Activated CD4-positive, alpha-beta T cell treated with anti-CD3 and anti-CD28 coated beads, Interleukin-2, amount 10 ng/mL, durations not matched to agents 24 days and 14 days (primary cell): ENCODE measurements at regions of chr3 and their contacts with region 1.

Region 1: GRCh38 chr3:125141596-125142419 is 70.7 kb downstream of the SLC12A8 start:
- DNase-seq: peak; percentile 92
- H3K4me3 Mint-ChIP-seq: peak overlapping the region; percentile 82
- H3K27ac Mint-ChIP-seq: peak overlapping the region; percentile 90
- H3K4me1 Mint-ChIP-seq: peaks cover 58% of the 10 kb centered on the region
- H3K27me3 Mint-ChIP-seq: peaks cover 40% of the 10 kb centered on the region

Region 2: DNA sequence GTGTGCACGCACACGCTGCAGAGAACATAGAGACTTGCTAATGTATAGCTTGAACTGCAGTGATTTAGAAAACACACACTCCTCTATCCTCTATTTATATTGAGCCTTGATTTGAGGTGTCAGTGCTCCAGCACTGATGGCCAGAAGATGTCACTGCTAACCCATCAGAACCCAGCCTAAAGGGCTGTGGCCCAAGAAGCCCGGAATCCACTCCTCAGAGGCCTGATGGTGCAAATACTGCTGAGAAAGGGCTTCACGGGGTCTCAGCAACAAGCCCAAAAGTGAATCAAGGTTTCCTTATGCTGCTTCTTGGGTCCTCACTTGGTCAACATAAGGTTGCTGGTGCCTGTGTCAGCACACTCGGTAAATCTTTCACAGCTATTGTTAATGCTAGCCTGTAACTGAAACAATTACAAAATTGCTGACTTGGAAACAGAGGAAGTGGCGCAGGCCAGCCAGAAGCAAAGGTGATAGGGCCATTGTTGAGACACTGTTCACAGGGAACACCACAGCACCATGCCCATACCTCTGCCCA is 146.3 kb before region 1 on chr3:
- intact Hi-C with region 1: loop called (anchors 5 kb)
- DNase-seq: peak; percentile 87
- H3K4me3 Mint-ChIP-seq: no peak overlapping the region
- H3K27ac Mint-ChIP-seq: no peak overlapping the region
- H3K4me1 Mint-ChIP-seq: peaks cover 13% of the 10 kb centered on the region
- H3K27me3 Mint-ChIP-seq: no peaks in the 10 kb centered on the region

Region 3: GRCh38 chr3:125039131-125040100 is 102.4 kb before region 1 on chr3:
- intact Hi-C with region 1: loop called (anchors 5 kb)
- DNase-seq: no peak
- H3K4me3 Mint-ChIP-seq: no peak overlapping the region
- H3K27ac Mint-ChIP-seq: no peak overlapping the region
- H3K4me1 Mint-ChIP-seq: peaks cover 16% of the 10 kb centered on the region
- H3K27me3 Mint-ChIP-seq: peaks cover 3% of the 10 kb centered on the region

Region 4: DNA sequence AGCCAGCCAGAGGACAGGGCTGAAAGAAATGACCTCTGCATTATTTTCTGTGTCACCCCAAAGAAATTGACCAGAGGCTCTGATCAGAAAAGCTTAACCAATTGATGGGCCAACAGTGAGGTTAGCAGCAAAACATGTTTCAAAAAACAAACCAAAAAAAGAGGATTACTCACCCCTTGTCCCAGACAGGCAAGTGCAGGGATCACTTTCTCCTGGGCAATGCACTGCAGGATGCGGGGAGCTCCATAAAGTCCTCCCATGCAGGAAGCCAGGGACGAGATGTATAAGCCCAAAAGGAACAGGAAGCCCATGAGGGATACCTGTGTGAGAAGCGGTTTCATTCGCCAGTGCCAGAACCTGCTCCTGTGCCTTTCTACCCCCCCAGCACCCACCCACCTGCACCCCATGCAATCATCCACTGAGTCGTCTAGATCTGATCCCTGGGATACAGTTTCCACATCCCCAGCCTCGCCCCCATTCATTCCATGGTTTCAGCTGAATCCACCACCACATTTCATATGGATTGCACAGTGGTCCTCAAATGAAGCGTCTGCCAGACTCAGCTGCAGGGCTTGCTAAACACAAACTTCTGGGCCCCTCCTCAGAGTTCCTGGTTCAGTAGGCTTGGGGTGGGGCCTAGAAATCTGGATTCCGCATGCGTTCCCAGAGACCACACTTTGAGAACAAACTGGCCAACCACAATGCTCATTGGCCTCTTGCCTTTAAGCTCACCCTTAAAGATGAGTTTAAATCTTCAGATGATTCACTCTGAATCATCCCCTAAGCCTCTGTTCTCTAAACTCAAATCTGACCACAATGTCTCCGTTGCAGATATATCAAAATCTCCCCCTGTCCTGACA is 31.6 kb before region 1 on chr3:
- intact Hi-C with region 1: loop called (anchors 1 kb)
- DNase-seq: peak; percentile 51
- H3K4me3 Mint-ChIP-seq: no peak overlapping the region
- H3K27ac Mint-ChIP-seq: no peak overlapping the region
- H3K4me1 Mint-ChIP-seq: peaks cover 35% of the 10 kb centered on the region
- H3K27me3 Mint-ChIP-seq: peaks cover 28% of the 10 kb centered on the region

Region 5: GRCh38 chr3:125125821-125126245 is 16.0 kb before region 1 on chr3:
- intact Hi-C with region 1: loop called (anchors 1 kb)
- DNase-seq: peak; percentile 78
- H3K4me3 Mint-ChIP-seq: peak overlapping the region; percentile 9
- H3K27ac Mint-ChIP-seq: peak overlapping the region; percentile 68
- H3K4me1 Mint-ChIP-seq: peaks cover 59% of the 10 kb centered on the region
- H3K27me3 Mint-ChIP-seq: peaks cover 10% of the 10 kb centered on the region

Region 6: DNA sequence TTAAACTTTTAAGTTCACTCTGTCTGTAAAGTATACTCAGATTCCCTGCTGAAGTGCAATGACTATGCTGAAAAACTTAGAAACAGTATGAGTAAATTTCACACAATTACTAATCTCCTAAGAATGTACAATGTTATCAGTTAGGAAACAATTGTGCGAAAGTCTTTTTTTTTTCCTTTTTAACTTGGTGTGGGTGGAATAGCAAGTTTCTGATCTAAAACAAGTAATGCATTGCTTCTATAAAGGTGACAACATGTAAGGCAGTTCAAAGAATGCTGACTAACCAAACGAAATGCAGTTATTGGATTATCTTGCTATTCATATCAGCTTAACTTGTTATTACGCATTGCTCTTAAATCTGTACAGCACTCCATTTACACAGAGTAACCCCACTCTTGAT is 90.1 kb after region 1 on chr3:
- intact Hi-C with region 1: loop called (anchors 5 kb)
- DNase-seq: no peak
- H3K4me3 Mint-ChIP-seq: no peak overlapping the region
- H3K27ac Mint-ChIP-seq: no peak overlapping the region
- H3K4me1 Mint-ChIP-seq: peaks cover 5% of the 10 kb centered on the region
- H3K27me3 Mint-ChIP-seq: no peaks in the 10 kb centered on the region